CD8-positive, alpha-beta T cell (primary cell): ENCODE measurements at regions of chr2 and their contacts with region 1.

Region 1: DNA sequence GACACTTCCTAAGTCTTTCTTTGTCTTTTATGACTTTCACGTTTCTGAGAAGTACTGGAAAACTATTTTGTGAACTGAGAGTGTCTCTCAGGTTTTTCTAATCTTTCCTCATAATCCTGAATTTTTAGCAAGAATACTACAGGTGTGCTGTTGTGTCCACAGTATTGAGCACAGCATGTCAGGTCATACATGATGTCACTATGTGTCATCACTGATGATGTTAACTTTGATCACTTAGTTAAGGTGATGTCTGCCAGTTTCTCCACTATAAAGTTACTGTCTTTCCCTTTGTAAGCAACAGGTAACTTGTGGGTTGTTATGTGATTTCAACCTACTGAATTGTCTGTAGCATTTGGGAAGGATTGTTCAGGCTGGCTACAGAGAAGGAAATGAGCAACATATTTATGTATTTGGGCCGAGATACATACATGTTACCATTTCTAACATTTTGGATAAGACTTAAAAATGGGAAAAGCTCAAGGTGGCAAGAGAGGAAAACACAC is 11.1 kb downstream of the MATN3 start:
- DNase-seq: no peak
- ATAC-seq: no peak
- H3K4me3 ChIP-seq: no peak overlapping the region
- H3K4me3 Mint-ChIP-seq: no peak overlapping the region
- H3K27ac ChIP-seq: no peak overlapping the region
- H3K27ac Mint-ChIP-seq: no peak overlapping the region
- H3K4me1 ChIP-seq: no peaks in the 10 kb centered on the region
- H3K4me1 Mint-ChIP-seq: no peaks in the 10 kb centered on the region
- H3K27me3 ChIP-seq: peaks cover 0 to 3% of the 10 kb centered on the region in 2 experiments
- H3K27me3 Mint-ChIP-seq: peaks cover 21% of the 10 kb centered on the region
- CTCF ChIP-seq: no peak

Region 2: GRCh38 chr2:19963386-19963785 is 38.0 kb before region 1 on chr2:
- CTCF ChIA-PET with region 1: no interaction called
- POLR2A ChIA-PET with region 1: no interaction called
- intact Hi-C with region 1: loop called in 1 of 2 experiments (anchors 5 kb)
- DNase-seq: no peak
- ATAC-seq: no peak
- H3K4me3 ChIP-seq: no peak overlapping the region
- H3K4me3 Mint-ChIP-seq: no peak overlapping the region
- H3K27ac ChIP-seq: no peak overlapping the region
- H3K27ac Mint-ChIP-seq: no peak overlapping the region
- H3K4me1 ChIP-seq: no peaks in the 10 kb centered on the region
- H3K4me1 Mint-ChIP-seq: no peaks in the 10 kb centered on the region
- H3K27me3 ChIP-seq: no peaks in the 10 kb centered on the region
- H3K27me3 Mint-ChIP-seq: no peaks in the 10 kb centered on the region
- CTCF ChIP-seq: no peak

Region 3: GRCh38 chr2:20071397-20072383 is 70.3 kb after region 1 on chr2:
- CTCF ChIA-PET with region 1: no interaction called
- POLR2A ChIA-PET with region 1: no interaction called
- intact Hi-C with region 1: no loop called
- DNase-seq: peak in 1 of 9 experiments; percentile 35
- ATAC-seq: no peak
- H3K4me3 ChIP-seq: no peak overlapping the region
- H3K4me3 Mint-ChIP-seq: no peak overlapping the region
- H3K27ac ChIP-seq: no peak overlapping the region
- H3K27ac Mint-ChIP-seq: no peak overlapping the region
- H3K4me1 ChIP-seq: no peaks in the 10 kb centered on the region
- H3K4me1 Mint-ChIP-seq: no peaks in the 10 kb centered on the region
- H3K27me3 ChIP-seq: no peaks in the 10 kb centered on the region
- H3K27me3 Mint-ChIP-seq: peaks cover 3% of the 10 kb centered on the region
- CTCF ChIP-seq: no peak